K562 (cell line): ENCODE measurements at regions of chr5 and their contacts with region 1.

Region 1: GRCh38 chr5:32232441-32233219 is 58.5 kb upstream of the GOLPH3 start:
- DNase-seq: peak; percentile 48 to 71 (median 56)
- ATAC-seq: peak; percentile 90
- H3K4me3 ChIP-seq: no peak overlapping the region
- H3K27ac ChIP-seq: no peak overlapping the region
- H3K4me1 ChIP-seq: peaks cover 0 to 4% of the 10 kb centered on the region in 2 experiments; a peak in 1 of 5 replicates
- H3K27me3 ChIP-seq: no peaks in the 10 kb centered on the region
- CTCF ChIP-seq: peak; percentile 78 to 92 (median 81)
- EP300 ChIP-seq: no peak
- POLR2A ChIP-seq: no peak
- RAD21 ChIP-seq: peak; percentile 80 to 90

Region 2: GRCh38 chr5:32319392-32319791 is 86.8 kb after region 1 on chr5:
- CTCF ChIA-PET with region 1: interaction called, 3 read pairs
- POLR2A ChIA-PET with region 1: interaction called, 5 read pairs
- in situ Hi-C with region 1: no loop called
- intact Hi-C with region 1: loop called (anchors 2 kb)
- DNase-seq: peak in 1 of 4 experiments; percentile 37
- ATAC-seq: peak; percentile 66
- H3K4me3 ChIP-seq: no peak overlapping the region
- H3K27ac ChIP-seq: no peak overlapping the region
- H3K4me1 ChIP-seq: peaks cover 3 to 23% of the 10 kb centered on the region in 2 experiments; a peak in 3 of 5 replicates
- H3K27me3 ChIP-seq: no peaks in the 10 kb centered on the region
- CTCF ChIP-seq: peak; percentile 43 to 48 (median 45); a peak in 5 of 6 replicates
- EP300 ChIP-seq: no peak
- POLR2A ChIP-seq: no peak
- RAD21 ChIP-seq: peak in 1 of 2 experiments; percentile 60; a peak in 2 of 4 replicates

Region 3: DNA sequence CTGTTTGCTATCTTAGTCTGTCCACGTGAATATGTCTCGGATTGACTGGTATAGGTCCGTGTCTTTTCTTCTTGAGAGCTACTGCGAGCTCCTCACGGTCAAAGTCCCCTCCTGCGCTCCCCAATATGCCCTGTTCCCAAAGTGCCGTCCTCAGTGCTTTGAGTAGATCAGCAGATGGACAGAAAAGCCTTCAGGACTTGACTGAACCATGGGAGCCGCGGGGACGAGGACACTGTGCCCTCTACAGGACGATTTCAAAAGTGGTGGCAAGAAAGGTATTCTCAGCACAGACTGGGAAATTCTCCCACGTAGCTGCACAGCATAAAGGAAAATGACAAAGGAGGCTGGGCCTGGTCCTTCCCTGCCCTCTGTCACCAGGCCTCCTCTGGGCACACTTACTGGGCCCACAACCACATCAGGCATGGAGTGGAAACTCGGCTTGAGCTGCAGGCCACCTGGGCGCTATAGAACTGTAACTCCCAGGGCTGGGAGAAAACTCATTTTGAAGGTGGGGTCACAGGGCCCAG is 96.7 kb after region 1 on chr5:
- CTCF ChIA-PET with region 1: interaction called, 18 read pairs
- POLR2A ChIA-PET with region 1: no interaction called
- in situ Hi-C with region 1: no loop called
- intact Hi-C with region 1: loop called (anchors 1 kb)
- DNase-seq: peak; percentile 71 to 87 (median 78)
- ATAC-seq: peak; percentile 98
- H3K4me3 ChIP-seq: no peak overlapping the region
- H3K27ac ChIP-seq: no peak overlapping the region
- H3K4me1 ChIP-seq: peaks cover 0 to 3% of the 10 kb centered on the region in 2 experiments; a peak in 1 of 5 replicates
- H3K27me3 ChIP-seq: no peaks in the 10 kb centered on the region
- CTCF ChIP-seq: peak; percentile 87 to 95 (median 94)
- EP300 ChIP-seq: no peak
- POLR2A ChIP-seq: no peak
- RAD21 ChIP-seq: peak; percentile 90 to 94